ENCODE measurements at regions of chr19 and their contacts with region 1.

Region 1: GRCh38 chr19:33778089-33778791 is 18.4 kb upstream of the KCTD15 start:
- DNase-seq: peak; percentile 61
- ATAC-seq: peak; percentile 98
- H3K4me3 ChIP-seq: no peak overlapping the region
- H3K27ac ChIP-seq: no peak overlapping the region
- H3K4me1 ChIP-seq: no peaks in the 10 kb centered on the region
- H3K27me3 ChIP-seq: peaks cover 16% of the 10 kb centered on the region; the same call in 1 of the 2 replicates
- CTCF ChIP-seq: peak; percentile 100; the same call in 1 of the 2 replicates
- POLR2A ChIP-seq: 0 out of 2 replicates have a peak, but pooled peaks have one; percentile 53
- RAD21 ChIP-seq: peak; percentile 100

Region 2: GRCh38 chr19:33737681-33738371 is 40.4 kb before region 1 on chr19:
- CTCF ChIA-PET with region 1: no interaction called
- POLR2A ChIA-PET with region 1: no interaction called
- dilution Hi-C with region 1: no loop called
- in situ Hi-C with region 1: no loop called
- intact Hi-C with region 1: no loop called
- DNase-seq: no peak
- ATAC-seq: no peak
- H3K4me3 ChIP-seq: no peak overlapping the region
- H3K27ac ChIP-seq: no peak overlapping the region
- H3K4me1 ChIP-seq: no peaks in the 10 kb centered on the region
- H3K27me3 ChIP-seq: no peaks in the 10 kb centered on the region
- CTCF ChIP-seq: no peak
- POLR2A ChIP-seq: no peak
- RAD21 ChIP-seq: no peak

Region 3: DNA sequence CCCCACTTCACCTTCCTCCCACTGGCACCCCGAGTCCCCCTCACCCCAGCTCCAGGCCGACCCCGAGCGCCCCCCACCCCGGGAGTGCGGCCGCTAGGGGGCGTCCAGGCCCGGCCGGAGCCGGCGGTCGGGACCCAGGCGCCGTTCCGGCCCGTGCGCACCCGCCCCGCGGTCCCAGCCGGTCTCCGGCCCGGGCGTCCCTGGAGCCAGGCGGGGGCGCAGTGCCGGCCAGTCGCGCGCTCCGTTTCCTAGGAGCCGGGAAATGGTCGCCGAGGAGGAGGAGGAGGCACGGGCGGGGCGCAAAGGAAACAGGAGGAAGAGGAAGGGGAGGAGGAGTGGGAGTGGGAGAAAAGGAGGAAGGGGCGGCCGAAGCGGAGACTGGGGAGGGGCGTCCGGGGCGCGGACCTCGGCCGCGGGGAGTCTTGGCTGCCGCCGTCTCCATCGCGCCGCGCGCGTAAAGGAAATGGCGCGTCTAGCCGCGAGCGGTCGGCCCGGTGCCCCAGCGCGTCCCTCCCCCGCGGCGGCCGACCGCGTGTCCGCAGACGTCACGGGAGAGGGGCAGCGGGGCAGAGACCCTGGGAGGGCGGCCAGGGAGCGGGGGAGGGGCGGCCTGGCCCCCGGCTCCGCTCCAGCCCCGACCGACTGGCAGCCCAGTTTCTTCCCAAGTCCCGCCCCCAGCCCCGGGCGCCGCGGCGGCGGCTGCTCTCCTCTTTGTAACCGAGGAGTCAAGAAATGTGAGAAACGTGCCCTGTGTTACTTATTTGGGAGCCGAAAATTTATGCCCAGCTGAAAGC is 17.3 kb after region 1 on chr19:
- CTCF ChIA-PET with region 1: interaction called, 12 read pairs
- POLR2A ChIA-PET with region 1: no interaction called
- dilution Hi-C with region 1: no loop called
- in situ Hi-C with region 1: no loop called
- intact Hi-C with region 1: no loop called
- DNase-seq: peak; percentile 75
- ATAC-seq: peak; percentile 74
- H3K4me3 ChIP-seq: peak overlapping the region; percentile 63
- H3K27ac ChIP-seq: peak overlapping the region; percentile 83
- H3K4me1 ChIP-seq: peaks cover 2% of the 10 kb centered on the region; the same call in 1 of the 2 replicates
- H3K27me3 ChIP-seq: peaks cover 9% of the 10 kb centered on the region
- CTCF ChIP-seq: peak; percentile 68
- POLR2A ChIP-seq: peak; percentile 73; the same call in 1 of the 2 replicates
- RAD21 ChIP-seq: peak; percentile 37

Region 4: GRCh38 chr19:33998739-33999345 is 220.6 kb after region 1 on chr19:
- CTCF ChIA-PET with region 1: interaction called, 36 read pairs
- POLR2A ChIA-PET with region 1: no interaction called
- dilution Hi-C with region 1: no loop called
- in situ Hi-C with region 1: loop called (anchors 5 kb)
- intact Hi-C with region 1: loop called (anchors 1 kb)
- DNase-seq: no peak
- ATAC-seq: no peak
- H3K4me3 ChIP-seq: no peak overlapping the region
- H3K27ac ChIP-seq: no peak overlapping the region
- H3K4me1 ChIP-seq: no peaks in the 10 kb centered on the region
- H3K27me3 ChIP-seq: no peaks in the 10 kb centered on the region; the same call in none of the 2 replicates
- CTCF ChIP-seq: peak; percentile 43
- POLR2A ChIP-seq: no peak
- RAD21 ChIP-seq: peak; percentile 28; the same call in 1 of the 2 replicates

Region 5: GRCh38 chr19:34145741-34146202 is 367.5 kb after region 1 on chr19:
- CTCF ChIA-PET with region 1: interaction called, 5 read pairs
- POLR2A ChIA-PET with region 1: no interaction called
- dilution Hi-C with region 1: no loop called
- in situ Hi-C with region 1: no loop called
- intact Hi-C with region 1: loop called (anchors 1 kb)
- DNase-seq: peak; percentile 56
- ATAC-seq: peak; percentile 92
- H3K4me3 ChIP-seq: no peak overlapping the region
- H3K27ac ChIP-seq: no peak overlapping the region
- H3K4me1 ChIP-seq: no peaks in the 10 kb centered on the region
- H3K27me3 ChIP-seq: no peaks in the 10 kb centered on the region
- CTCF ChIP-seq: peak; percentile 89
- POLR2A ChIP-seq: no peak
- RAD21 ChIP-seq: peak; percentile 85

Measured in IMR-90 (cell line).